Heart left ventricle (tissue), 16 donors: ENCODE measurements at regions of chr3 and their contacts with region 1.

Region 1: GRCh38 chr3:191397771-191398170 is 63.2 kb upstream of the PYDC2 start:
- DNase-seq: no peak
- ATAC-seq: no peak
- H3K4me3 ChIP-seq: no peak overlapping the region
- H3K27ac ChIP-seq: no peak overlapping the region
- H3K4me1 ChIP-seq: no peaks in the 10 kb centered on the region
- H3K27me3 ChIP-seq: no peaks in the 10 kb centered on the region
- CTCF ChIP-seq: no peak
- POLR2A ChIP-seq: no peak

Region 2: DNA sequence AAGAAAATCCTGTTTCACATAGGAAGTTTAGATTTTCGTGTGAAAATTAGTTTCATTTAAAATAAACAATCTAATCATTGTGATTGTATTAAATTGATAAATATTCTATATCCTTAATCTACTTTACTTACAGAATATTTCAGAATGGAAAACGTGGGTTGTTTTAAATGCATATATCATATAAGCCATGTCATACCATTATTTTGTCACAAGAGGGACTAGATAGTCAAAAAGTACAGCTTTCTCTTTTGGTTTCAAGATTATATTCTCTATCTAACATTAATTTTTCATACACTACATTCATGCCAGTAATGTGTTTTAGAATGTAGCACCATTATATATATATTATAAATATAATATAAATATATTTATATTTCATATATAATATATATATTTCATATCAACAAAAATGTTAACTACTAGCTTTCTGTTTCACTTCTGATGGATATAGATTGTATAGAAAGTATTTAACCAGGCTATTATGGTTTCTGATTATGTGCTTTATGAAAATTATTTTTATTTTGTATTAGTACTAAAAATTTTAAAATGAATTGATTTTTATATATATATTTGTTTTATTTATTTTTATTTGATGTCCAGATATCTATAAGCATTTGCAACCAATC is 153.4 kb before region 1 on chr3:
- intact Hi-C with region 1: loop called in 7 of 10 experiments (anchors 5 to 10 kb)
- DNase-seq: no peak
- ATAC-seq: no peak
- H3K4me3 ChIP-seq: no peak overlapping the region
- H3K27ac ChIP-seq: peak overlapping the region in 1 of 12 donors; percentile 30
- H3K4me1 ChIP-seq: peaks cover 0 to 10% (median 0%) of the 10 kb centered on the region in 12 donors
- H3K27me3 ChIP-seq: no peaks in the 10 kb centered on the region
- CTCF ChIP-seq: peak; percentile 30 to 62 (median 48)
- POLR2A ChIP-seq: no peak